GM13976 (cell line): ENCODE measurements at regions of chr5 and their contacts with region 1.

Region 1: DNA sequence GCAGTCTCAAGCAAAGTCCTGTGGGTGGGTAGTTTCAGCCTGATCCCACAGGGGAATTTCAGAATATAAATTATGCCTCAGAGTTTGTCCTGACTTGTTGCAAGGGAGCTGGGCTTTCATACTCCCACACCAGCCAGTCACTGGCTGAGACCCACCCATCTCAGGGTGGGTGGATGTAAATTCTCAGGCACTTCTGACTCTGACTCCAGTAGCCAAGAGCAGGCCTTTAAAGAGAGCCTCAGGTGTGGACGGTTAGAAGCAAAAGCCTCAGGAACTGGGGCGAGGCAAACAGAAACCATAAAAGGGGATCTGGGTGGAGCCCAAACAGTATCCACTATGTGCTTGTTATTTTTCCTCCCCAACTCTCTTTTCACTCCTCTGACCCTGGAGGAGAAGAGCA is 28.6 kb upstream of the FBXW11 start:
- DNase-seq: peak; percentile 72
- CTCF ChIP-seq: no peak

Region 2: DNA sequence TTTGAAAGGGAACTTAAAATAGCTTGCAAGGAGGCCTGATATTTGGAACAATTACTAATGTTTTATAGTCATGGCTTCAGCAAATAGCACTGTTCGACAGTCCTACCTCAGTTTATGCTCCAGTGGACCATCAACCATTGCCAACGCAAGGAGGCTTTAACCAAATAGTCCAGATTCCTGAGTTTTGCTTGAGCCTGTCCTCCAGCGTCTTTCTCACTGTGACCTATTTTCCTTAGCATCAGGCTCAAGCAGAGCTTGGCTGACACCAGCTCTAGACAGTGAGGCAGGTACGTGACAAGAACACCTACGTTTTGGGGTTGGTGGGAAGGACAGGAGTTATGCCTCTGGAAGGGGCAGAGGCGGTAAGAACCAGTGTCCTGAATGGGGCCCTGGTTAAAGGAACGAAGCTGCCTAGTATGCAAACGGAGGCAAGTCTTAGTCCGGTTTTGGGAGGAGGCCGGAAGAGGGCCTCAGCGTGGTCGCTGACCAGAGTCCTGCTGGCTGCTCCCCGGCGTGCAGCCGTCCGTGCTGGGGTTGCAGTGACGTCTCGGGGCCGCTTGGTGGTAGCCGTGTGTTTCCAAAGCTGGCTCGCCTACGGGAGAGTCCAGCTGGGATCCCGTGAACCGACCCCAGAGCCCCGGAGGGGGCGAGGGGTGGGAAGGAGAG is 616.6 kb before region 1 on chr5:
- in situ Hi-C with region 1: loop called (anchors 25 kb)
- DNase-seq: peak; percentile 91
- CTCF ChIP-seq: peak; percentile 98

Region 3: GRCh38 chr5:171606414-171607024 is 428.5 kb before region 1 on chr5:
- in situ Hi-C with region 1: loop called (anchors 25 kb)
- DNase-seq: no peak
- CTCF ChIP-seq: no peak

Region 4: DNA sequence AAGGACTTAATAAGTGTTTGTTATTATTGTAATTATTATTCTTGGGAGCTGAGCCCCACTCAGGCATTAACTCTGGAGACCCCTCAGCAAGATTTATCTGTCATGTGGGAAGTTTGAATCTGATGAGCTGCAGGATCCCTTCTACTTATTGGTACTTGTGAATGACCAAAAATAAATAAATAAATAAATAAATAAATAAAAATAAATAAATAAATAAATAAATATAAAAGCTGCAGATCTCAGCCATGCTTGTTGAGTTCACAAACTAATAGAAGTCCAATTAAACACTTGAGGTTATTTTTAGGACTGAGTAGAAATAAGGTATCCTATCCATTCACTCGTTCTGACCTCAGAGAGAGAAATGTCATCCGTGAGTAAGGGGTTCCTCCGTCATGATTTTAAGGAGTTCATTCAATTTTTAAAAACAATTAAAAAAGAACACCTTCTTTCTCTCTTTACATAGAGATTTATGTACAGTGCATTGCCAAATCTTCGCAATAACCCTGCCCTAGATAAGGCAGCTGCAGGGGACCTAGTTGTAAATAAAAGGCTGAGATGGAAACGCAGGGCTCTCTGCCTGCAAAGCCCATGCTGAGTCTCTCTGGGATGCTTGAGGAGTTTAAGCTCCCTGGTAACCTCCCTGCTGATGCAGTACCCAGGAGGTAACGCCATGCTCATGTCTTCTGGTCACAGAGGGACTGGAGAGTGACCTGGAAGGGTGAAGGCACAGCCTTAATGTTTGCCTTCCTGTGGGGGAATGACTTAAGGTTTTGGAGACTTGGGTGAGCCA is 160.1 kb after region 1 on chr5:
- in situ Hi-C with region 1: no loop called
- DNase-seq: no peak
- CTCF ChIP-seq: no peak